ENCODE measurements at regions of chr2 and their contacts with region 1.

Region 1: DNA sequence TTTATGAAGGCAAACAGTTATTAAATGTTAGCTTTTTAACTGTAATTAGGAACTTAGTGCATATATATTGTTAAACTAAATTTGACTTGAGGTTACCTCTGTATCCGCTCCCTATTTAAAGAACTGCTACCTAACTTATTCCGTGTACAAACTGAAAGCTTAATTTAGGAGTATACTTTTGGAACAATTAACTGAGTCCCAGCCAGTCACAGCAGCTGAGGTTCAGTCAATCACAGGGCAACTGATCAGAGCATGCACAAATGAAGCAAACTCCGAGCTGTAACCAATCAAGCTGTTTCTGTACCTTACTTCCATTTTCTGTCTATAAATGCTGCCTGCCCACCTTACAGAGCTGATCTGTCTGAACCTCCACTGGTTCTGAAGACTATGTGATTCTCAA is 61.2 kb downstream of the RAB3GAP1 start:
- DNase-seq: no peak
- H3K4me3 ChIP-seq: no peak overlapping the region
- CTCF ChIP-seq: no peak
- POLR2A ChIP-seq: no peak

Region 2: DNA sequence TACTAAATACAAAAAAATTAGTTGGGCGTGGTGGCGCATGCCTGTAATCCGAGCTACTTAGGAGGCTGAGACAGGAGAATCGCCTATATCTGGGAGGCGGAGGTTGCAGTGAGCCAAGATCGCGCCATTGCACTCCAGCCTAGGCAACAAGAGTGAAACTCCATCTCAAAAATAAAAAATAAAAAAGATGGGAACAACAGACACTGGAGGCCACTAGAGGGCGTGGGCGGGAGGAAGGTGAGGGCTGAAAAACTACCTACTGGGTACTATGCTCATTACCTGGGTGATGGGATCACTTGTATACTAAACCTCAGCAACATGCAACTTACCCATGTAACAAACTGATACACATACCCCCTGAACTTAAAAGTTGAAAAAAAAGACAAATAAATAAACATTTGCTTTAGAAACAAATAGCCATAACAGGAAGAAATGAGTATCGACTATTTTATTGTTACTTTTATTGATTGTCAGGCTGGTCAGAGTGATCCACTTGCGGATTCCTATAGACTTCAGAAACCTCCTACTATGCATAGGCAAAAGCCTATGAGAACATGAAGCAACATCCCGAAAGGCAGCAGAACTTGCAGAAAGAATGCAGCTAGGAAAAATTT is 455.6 kb before region 1 on chr2:
- intact Hi-C with region 1: no loop called
- DNase-seq: no peak
- H3K4me3 ChIP-seq: no peak overlapping the region
- CTCF ChIP-seq: no peak
- POLR2A ChIP-seq: no peak

Region 3: GRCh38 chr2:134973241-134974138 is 139.8 kb before region 1 on chr2:
- intact Hi-C with region 1: loop called (anchors 5 kb)
- DNase-seq: no peak
- H3K4me3 ChIP-seq: no peak overlapping the region
- CTCF ChIP-seq: no peak
- POLR2A ChIP-seq: no peak

Measured in lower leg skin (tissue), 4 donors.